Activated T-helper 2 cell treated with anti-CD3 and anti-CD28 coated beads, Interferon-gamma antibody, Interleukin-2, Interleukin-4, amounts not matched to agents 10 μg/mL and 5 μg/mL and 100 μg/mL, durations not matched to agents 14 hours and 24 hours and 36 hours (primary cell): ENCODE measurements at regions of chr20 and their contacts with region 1.

Region 1: DNA sequence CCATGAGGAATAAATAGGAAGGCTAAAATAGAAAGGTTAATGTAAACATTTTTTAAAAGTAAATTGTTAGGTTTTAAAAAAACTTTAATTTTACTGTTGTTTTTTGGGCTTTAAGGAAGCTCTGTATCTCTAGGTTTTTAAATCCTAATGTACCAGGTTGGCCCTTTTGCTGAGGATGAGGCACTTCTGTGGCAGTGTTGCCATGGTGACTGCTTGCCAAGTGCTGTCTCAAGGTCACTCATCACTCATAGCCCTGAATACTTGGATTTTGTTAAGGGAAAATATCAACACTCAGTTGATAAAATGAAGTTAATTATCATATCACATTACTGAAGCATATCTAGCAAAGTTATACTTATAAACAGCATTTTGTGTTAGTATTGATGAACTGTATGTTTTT is 50.2 kb downstream of the NCOA3 start:
- DNase-seq: no peak
- H3K4me3 Mint-ChIP-seq: no peak overlapping the region
- H3K27ac Mint-ChIP-seq: peak overlapping the region; percentile 55
- H3K4me1 Mint-ChIP-seq: peaks cover 29% of the 10 kb centered on the region
- H3K27me3 Mint-ChIP-seq: no peaks in the 10 kb centered on the region

Region 2: GRCh38 chr20:47515843-47516242 is 36.0 kb before region 1 on chr20:
- intact Hi-C with region 1: loop called (anchors 5 kb)
- DNase-seq: no peak
- H3K4me3 Mint-ChIP-seq: no peak overlapping the region
- H3K27ac Mint-ChIP-seq: peak overlapping the region; percentile 91
- H3K4me1 Mint-ChIP-seq: peaks cover 27% of the 10 kb centered on the region
- H3K27me3 Mint-ChIP-seq: no peaks in the 10 kb centered on the region

Region 3: DNA sequence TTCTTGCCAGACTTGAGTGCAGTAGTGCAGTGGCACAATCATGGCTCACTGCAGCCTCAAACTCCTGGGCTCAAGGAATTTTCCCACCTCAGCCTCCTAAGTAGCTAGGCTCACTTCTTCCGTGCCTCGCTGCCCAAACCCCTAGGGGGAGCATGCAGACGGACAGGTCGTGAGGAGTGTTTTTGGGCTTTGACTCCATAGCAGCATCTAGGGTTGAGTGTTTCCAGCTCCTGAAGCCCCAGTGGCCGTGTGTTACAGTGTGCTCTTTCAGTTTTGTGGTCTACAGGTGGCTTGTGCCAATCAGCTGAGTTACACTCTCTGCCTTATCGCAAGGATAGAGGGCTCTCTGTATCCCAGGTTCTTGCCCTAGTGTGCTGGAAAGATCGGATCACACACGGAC is 16.8 kb before region 1 on chr20:
- intact Hi-C with region 1: no loop called
- DNase-seq: no peak
- H3K4me3 Mint-ChIP-seq: no peak overlapping the region
- H3K27ac Mint-ChIP-seq: no peak overlapping the region
- H3K4me1 Mint-ChIP-seq: peaks cover 43% of the 10 kb centered on the region
- H3K27me3 Mint-ChIP-seq: no peaks in the 10 kb centered on the region